Stomach (tissue), 19 donors: ENCODE measurements at regions of chr6 and their contacts with region 1.

Region 1: GRCh38 chr6:73180763-73181619 is 44.3 kb downstream of the KHDC1L start:
- DNase-seq: peak in 1 of 2 donors; percentile 78
- H3K4me3 ChIP-seq: peak overlapping the region; percentile 19 to 36 (median 30)
- H3K27ac ChIP-seq: no peak overlapping the region
- H3K4me1 ChIP-seq: peaks cover 0 to 6% (median 1%) of the 10 kb centered on the region in 4 donors
- H3K27me3 ChIP-seq: no peaks in the 10 kb centered on the region
- CTCF ChIP-seq: peak in 6 of 7 experiments; percentile 17 to 85 (median 75)
- EP300 ChIP-seq: no peak
- POLR2A ChIP-seq: no peak

Region 2: GRCh38 chr6:72411872-72412708 is 768.9 kb before region 1 on chr6:
- intact Hi-C with region 1: loop called (anchors 10 kb)
- DNase-seq: peak; percentile 81 to 91
- H3K4me3 ChIP-seq: no peak overlapping the region
- H3K27ac ChIP-seq: no peak overlapping the region
- H3K4me1 ChIP-seq: no peaks in the 10 kb centered on the region
- H3K27me3 ChIP-seq: peaks cover 0 to 4% (median 0%) of the 10 kb centered on the region in 3 donors
- CTCF ChIP-seq: peak in 6 of 7 experiments; percentile 57 to 100 (median 100)
- EP300 ChIP-seq: no peak
- POLR2A ChIP-seq: no peak

Region 3: DNA sequence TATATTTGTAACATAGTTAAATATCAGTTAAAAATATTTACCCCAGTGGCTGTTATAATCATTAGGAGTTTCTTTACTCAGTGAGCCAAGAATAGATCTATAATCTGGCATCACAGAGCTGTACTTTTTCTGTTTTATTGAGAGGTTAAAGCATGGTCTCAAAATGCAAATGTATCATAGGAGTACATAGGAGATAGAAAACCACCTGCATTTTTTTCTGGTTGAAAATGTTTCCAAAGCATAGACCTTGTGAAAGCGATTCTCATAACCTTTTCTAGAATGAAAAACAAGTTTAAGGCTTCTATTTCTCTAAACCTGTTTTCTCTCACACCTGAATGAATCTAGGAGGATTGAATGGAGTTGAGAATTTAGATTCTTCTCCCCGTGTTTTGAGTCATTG is 544.8 kb before region 1 on chr6:
- intact Hi-C with region 1: no loop called
- DNase-seq: no peak
- H3K4me3 ChIP-seq: no peak overlapping the region
- H3K27ac ChIP-seq: no peak overlapping the region
- H3K4me1 ChIP-seq: no peaks in the 10 kb centered on the region
- H3K27me3 ChIP-seq: no peaks in the 10 kb centered on the region
- CTCF ChIP-seq: no peak
- EP300 ChIP-seq: no peak
- POLR2A ChIP-seq: no peak